Dendritic cell treated with granulocyte-macrophage colony-stimulating factor and Interleukin-4, amounts not matched to agents 40 ng/mL and 50 ng/mL, for 4 days (primary cell): ENCODE measurements at regions of chr1 and their contacts with region 1.

Region 1: GRCh38 chr1:1889847-1890505 is 911 bp downstream of the GNB1 start:
- H3K4me3 Mint-ChIP-seq: peak overlapping the region; percentile 78
- H3K27ac Mint-ChIP-seq: peak overlapping the region; percentile 81
- H3K4me1 Mint-ChIP-seq: peaks cover 55% of the 10 kb centered on the region
- H3K27me3 Mint-ChIP-seq: peaks cover 17% of the 10 kb centered on the region

Region 2: DNA sequence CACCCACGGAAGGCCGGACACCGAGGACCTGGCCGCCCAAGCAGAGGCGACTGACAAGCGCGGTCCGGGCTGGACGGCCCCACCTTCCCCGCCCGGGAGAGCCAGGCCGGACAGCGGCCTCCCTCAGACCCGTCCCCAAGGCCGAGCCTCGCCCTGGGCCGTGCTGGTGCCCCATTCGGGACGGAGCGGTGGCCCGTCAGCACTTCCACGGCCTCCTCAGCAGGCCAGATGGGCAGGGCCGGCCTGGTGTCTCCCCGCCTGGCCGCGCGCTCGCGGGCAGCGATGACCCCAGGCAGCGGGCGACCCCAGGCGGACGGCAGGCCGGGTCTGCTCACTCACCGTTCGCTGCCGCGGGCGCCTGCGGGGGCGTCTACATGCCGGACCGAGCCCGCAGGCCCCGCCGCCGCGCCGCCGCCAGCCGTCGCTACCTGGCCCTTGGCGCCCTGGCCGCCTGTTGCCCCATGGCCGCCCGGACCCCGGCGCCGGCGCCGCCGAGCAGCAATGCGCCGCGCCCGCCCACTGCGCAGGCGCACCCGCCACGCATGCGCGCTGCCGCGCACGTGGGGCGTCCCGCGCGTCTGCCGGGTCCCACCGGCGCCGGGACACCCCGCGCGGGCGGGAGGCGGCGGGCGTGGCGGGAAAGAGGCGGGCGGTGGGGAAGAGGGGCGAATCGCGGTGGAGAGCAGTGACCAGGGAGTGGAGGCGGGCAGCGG is 111.9 kb before region 1 on chr1 and contains the start of gene NADK:
- intact Hi-C with region 1: loop called (anchors 5 kb)
- H3K4me3 Mint-ChIP-seq: peak within 1 kb of the TSS; percentile 84
- H3K27ac Mint-ChIP-seq: peak within 1 kb of the TSS; percentile 96
- H3K4me1 Mint-ChIP-seq: peaks cover 81% of the 10 kb centered on the region
- H3K27me3 Mint-ChIP-seq: no peaks in the 10 kb centered on the region

Region 3: GRCh38 chr1:1853593-1854257 is 36.3 kb before region 1 on chr1:
- intact Hi-C with region 1: loop called (anchors 5 kb)
- H3K4me3 Mint-ChIP-seq: no peak overlapping the region
- H3K27ac Mint-ChIP-seq: peak overlapping the region; percentile 49
- H3K4me1 Mint-ChIP-seq: peaks cover 70% of the 10 kb centered on the region
- H3K27me3 Mint-ChIP-seq: no peaks in the 10 kb centered on the region

Region 4: GRCh38 chr1:1906185-1907097 is 16.5 kb after region 1 on chr1:
- intact Hi-C with region 1: no loop called
- H3K4me3 Mint-ChIP-seq: no peak overlapping the region
- H3K27ac Mint-ChIP-seq: no peak overlapping the region
- H3K4me1 Mint-ChIP-seq: peaks cover 19% of the 10 kb centered on the region
- H3K27me3 Mint-ChIP-seq: peaks cover 14% of the 10 kb centered on the region